Panc1 (cell line): ENCODE measurements at regions of chr3 and their contacts with region 1.

Region 1: GRCh38 chr3:9067352-9067975 is 104.2 kb upstream of the RAD18 start:
- DNase-seq: peak; percentile 45
- ATAC-seq: peak; percentile 86
- H3K4me3 ChIP-seq: no peak overlapping the region
- H3K27ac ChIP-seq: no peak overlapping the region
- H3K4me1 ChIP-seq: no peaks in the 10 kb centered on the region
- H3K27me3 ChIP-seq: no peaks in the 10 kb centered on the region; the same call in 1 of the 2 replicates
- CTCF ChIP-seq: peak; percentile 95

Region 2: DNA sequence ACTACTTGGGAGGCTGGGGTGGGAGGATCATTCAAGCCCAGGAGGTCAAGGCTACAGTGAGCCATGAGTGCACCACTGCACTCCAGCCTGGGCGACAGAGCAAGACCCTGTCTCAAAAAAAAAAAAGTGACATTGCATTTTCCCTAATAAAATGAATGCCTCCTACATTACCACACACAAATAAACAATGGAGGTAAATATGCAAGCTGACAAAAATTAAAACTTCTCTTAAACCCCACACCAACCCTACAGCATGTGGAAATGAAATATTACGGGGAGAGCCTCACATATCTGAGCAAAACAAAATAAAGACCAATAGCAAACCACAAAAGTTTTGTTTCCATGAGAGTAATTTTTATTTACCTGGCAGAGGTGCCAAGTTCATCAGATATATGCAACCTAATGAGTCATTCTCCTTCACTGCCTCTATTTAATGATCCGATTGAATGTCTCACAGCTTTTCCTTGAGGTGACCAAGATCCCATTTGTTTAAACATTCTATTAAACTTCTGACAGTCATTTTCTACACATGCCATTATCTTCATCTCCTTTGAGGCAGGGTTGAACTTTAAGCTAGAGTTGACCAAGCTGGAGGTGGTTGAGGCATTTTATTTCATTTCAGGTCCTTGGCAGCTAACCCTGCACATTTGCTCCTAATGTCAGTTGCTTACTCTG is 343.2 kb before region 1 on chr3:
- CTCF ChIA-PET with region 1: no interaction called
- POLR2A ChIA-PET with region 1: no interaction called
- in situ Hi-C with region 1: no loop called
- intact Hi-C with region 1: no loop called
- DNase-seq: no peak
- ATAC-seq: peak; percentile 77
- H3K4me3 ChIP-seq: no peak overlapping the region
- H3K27ac ChIP-seq: no peak overlapping the region
- H3K4me1 ChIP-seq: no peaks in the 10 kb centered on the region
- H3K27me3 ChIP-seq: no peaks in the 10 kb centered on the region
- CTCF ChIP-seq: no peak

Region 3: DNA sequence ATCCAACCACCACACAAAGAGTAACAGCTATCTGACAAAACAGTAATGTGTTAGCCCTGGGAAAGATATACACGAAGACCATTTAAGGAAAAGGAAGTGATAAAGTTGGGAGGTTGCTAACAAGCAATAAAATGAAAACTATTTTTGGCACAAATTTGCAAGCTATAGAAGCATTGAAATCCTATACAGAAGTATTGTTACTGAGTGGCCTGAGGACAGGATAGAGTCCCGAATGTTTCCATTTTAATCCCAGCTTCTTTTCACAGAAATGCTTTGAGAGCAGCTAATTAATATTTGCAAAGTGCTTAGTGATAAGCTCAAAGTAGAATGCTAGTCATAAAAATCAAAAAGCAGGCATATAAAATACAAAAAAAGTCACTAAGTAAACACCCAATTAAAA is 155.7 kb before region 1 on chr3:
- CTCF ChIA-PET with region 1: no interaction called
- POLR2A ChIA-PET with region 1: no interaction called
- in situ Hi-C with region 1: no loop called
- intact Hi-C with region 1: no loop called
- DNase-seq: no peak
- ATAC-seq: no peak
- H3K4me3 ChIP-seq: no peak overlapping the region
- H3K27ac ChIP-seq: no peak overlapping the region
- H3K4me1 ChIP-seq: no peaks in the 10 kb centered on the region
- H3K27me3 ChIP-seq: no peaks in the 10 kb centered on the region
- CTCF ChIP-seq: no peak

Region 4: DNA sequence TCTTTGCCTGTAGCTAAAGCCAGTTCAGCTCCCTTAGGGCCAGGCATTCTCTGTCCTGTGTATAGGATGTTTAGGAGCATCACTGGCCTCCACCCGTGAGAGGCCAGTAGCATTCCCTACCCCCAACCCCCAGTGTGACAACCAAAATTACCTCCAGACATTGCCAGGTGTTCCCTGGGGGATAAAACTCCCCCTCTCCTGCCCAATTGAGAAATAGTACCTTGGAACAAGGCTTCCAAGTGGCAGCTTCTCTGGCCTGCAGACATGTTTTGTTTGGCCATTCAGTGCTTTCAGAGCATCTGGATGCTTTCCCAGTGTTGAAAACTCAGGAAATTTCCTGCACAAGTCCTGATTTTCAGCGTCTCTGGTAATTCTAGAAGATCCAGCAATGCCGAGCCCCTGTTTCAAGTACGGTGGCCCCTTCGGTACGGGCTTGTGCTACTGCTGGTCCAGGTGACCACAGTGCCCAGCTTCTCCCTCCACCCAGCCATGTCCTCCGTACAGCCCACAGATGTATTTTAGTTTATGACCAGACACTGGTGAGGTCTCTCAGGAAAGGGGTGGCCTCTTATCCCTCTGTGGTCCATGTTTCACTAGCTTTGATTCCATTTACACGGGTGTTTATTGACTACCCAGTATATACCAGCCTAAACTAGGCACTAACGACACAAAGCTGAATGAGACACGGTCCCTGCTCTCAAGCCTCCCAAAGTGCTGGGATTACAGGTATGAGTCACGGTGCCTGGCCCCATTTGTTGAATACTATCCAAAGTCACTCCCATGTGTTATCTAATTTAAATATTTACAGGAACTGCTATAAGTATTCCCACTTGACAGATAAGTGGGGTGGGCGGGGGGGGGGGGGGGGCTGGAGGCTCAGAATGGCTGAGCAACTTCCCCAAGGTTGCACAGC is 21.2 kb after region 1 on chr3:
- CTCF ChIA-PET with region 1: no interaction called
- POLR2A ChIA-PET with region 1: no interaction called
- in situ Hi-C with region 1: no loop called
- intact Hi-C with region 1: no loop called
- DNase-seq: no peak
- ATAC-seq: no peak
- H3K4me3 ChIP-seq: no peak overlapping the region
- H3K27ac ChIP-seq: no peak overlapping the region
- H3K4me1 ChIP-seq: no peaks in the 10 kb centered on the region
- H3K27me3 ChIP-seq: no peaks in the 10 kb centered on the region
- CTCF ChIP-seq: no peak

Region 5: GRCh38 chr3:9302425-9303181 is 235.1 kb after region 1 on chr3:
- CTCF ChIA-PET with region 1: no interaction called
- POLR2A ChIA-PET with region 1: no interaction called
- in situ Hi-C with region 1: no loop called
- intact Hi-C with region 1: loop called (anchors 10 kb)
- DNase-seq: peak; percentile 18
- ATAC-seq: peak; percentile 98
- H3K4me3 ChIP-seq: no peak overlapping the region
- H3K27ac ChIP-seq: no peak overlapping the region
- H3K4me1 ChIP-seq: no peaks in the 10 kb centered on the region
- H3K27me3 ChIP-seq: no peaks in the 10 kb centered on the region
- CTCF ChIP-seq: peak; percentile 88